T-cell (primary cell): ENCODE measurements at regions of chr17 and their contacts with region 1.

Region 1: DNA sequence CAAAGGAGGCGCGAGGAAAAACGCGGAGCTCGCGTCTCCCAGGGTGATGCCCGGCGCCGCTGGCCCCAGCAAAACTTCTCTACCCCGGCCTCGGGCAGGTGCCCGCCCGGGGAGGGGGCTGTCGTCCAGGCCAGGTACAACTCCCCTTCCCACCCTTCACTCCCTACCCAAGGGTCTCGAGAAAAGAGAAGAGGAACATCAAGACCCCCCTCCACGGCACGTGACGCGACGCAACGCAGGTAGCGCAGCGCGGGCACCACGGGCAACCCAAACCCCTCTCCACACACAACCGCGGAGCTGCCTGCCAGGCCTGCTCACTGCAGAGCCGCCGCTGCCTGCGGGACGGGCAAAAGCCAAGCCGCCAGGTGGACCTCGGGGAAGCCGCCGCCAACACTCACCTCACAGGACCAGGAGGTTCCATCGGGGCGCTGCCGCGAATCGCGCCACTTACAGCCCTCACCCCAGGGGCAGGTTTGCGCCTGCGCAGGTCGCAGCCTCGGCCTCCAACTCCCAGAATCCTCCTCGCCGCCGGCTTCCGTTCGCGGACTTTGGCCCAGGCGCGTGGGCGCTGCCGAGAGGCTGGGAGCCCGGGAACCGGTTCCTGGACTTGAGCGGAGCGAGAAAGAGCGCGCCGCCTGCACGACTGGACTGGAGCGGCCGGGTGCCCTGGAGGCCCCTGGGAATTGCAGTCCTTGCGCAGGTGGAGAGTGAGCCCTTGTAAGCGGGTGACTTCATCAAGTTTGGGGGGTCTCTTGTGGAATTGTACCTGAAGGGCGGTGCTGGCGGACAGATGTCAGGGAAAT is at the start of gene ZNF232:
- DNase-seq: peak; percentile 72 to 93 (median 82)
- ATAC-seq: peak; percentile 93 to 94 (median 94)
- H3K4me3 ChIP-seq: peak within 1 kb of the TSS; percentile 74 to 91
- H3K4me3 Mint-ChIP-seq: peak within 1 kb of the TSS; percentile 82 to 93 (median 89)
- H3K27ac ChIP-seq: peak within 1 kb of the TSS; percentile 63
- H3K27ac Mint-ChIP-seq: peak within 1 kb of the TSS; percentile 52 to 84
- H3K4me1 ChIP-seq: peaks cover 5 to 26% of the 10 kb centered on the region in 2 experiments
- H3K4me1 Mint-ChIP-seq: peaks cover 31 to 36% (median 34%) of the 10 kb centered on the region in 3 donors
- H3K27me3 ChIP-seq: peaks cover 0 to 23% of the 10 kb centered on the region in 2 experiments
- H3K27me3 Mint-ChIP-seq: peaks cover 3 to 18% of the 10 kb centered on the region in 2 donors
- total RNA-seq, gene ZNF232: 7.3 to 20.9 (median 14.2) TPM

Region 2: DNA sequence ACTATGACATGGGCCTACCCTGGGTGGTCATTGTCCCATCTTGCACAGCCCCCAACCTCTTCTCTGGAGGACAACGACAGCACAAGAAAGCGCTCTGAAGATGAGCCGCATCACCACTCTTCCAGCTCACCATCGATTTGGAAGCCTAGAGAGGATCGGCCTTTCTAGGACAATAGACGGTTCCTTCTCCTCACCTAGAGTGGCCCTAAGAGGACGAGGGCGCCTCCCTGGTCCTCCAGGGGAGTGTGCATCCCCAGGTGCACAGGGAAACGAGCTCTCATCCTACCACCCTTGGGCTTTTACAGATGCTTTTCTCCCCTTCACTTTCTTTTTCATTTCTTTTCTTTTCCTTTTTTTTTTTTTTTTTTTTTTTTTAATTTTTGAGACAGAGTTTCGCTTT is 56.1 kb before region 1 on chr17:
- CTCF ChIA-PET with region 1: no interaction called
- POLR2A ChIA-PET with region 1: interaction called in 1 of 2 experiments, 13 read pairs
- DNase-seq: no peak
- ATAC-seq: no peak
- H3K4me3 ChIP-seq: no peak overlapping the region
- H3K4me3 Mint-ChIP-seq: no peak overlapping the region
- H3K27ac ChIP-seq: no peak overlapping the region
- H3K27ac Mint-ChIP-seq: no peak overlapping the region
- H3K4me1 ChIP-seq: peaks cover 0 to 1% of the 10 kb centered on the region in 2 experiments
- H3K4me1 Mint-ChIP-seq: peaks cover under 1 to 3% (median 3%) of the 10 kb centered on the region in 3 donors
- H3K27me3 ChIP-seq: no peaks in the 10 kb centered on the region
- H3K27me3 Mint-ChIP-seq: no peaks in the 10 kb centered on the region